GM12878 (cell line): ENCODE measurements at regions of chr10 and their contacts with region 1.

Region 1: DNA sequence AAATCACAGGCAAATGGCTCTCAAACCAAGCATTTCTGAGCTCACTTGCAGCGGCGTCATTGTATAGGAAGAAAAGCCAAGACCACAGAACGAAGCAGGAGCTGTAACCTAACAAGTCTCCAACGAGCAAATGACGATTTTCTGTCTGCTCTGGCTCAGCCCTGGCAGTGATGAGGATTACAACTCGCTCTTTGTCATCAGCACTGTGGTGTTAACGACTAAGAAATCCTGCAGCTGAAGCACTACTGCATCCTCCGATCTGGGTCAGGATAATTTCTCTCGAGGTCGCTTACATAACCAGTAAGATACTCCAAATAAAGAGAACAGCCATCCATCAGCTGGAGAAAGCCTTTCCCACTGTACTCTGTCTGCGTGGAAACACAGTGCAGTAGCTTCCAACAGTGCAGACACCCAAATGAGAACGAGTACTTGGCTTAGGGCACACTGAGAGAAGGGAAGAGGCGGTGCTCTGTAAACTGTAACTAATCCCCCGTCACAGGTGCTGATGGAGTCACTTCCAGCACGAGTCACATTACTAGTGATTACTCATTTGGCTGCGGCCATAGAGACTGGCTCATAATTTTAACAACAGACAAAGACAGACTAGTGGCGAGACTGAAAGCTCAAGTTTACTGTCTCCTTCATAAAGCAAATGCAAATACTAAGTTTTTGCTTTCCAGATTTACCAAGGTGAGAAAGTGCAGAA is 135.8 kb downstream of the NRBF2 start:
- DNase-seq: peak; percentile 95
- ATAC-seq: peak; percentile 87
- H3K4me3 ChIP-seq: peak overlapping the region; percentile 91
- H3K27ac ChIP-seq: peak overlapping the region; percentile 80
- H3K4me1 ChIP-seq: peaks cover 18% of the 10 kb centered on the region
- H3K27me3 ChIP-seq: no peaks in the 10 kb centered on the region
- CTCF ChIP-seq: peak in 1 of 3 experiments; percentile 30; a peak in 1 of 6 replicates
- EP300 ChIP-seq: peak; percentile 83 to 84; a peak in 3 of 4 replicates
- POLR2A ChIP-seq: peak; percentile 99
- RAD21 ChIP-seq: no peak

Region 2: DNA sequence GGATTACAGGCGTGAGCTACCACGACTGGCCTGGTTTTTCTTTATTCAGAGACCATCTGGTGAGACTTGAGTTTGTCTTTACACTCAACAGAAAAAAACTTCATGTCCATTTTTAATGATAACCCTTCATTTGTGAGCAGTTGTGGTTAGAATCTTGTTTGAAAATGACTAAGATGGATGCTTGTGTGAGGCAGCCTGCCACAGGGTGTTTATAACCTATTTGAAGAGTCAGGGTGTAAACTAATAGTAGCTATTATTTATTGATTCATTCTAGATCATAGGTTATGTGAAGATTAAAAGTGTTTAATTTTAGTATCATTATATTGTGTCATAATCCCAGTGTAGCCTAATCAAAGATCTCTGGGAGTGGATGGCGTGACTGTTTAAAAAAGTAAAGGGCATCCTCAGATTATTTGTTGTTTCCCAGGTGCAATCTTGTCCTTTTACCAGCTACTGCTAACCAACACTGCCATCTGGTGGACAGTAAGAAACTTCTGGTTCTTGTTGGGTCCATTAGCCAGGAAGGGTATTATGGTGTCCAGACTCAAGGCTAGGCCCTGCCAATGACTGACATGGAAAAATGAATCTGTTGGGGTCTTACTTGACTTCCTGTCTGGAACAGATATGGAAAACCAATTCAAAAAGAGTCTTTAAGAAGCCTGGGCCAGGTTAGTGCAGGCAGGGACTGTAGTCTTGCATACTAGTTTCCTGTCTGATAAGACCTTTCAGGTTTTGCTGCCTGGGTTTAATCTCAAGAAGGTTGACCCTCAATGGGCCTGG is 110.9 kb before region 1 on chr10:
- CTCF ChIA-PET with region 1: no interaction called
- POLR2A ChIA-PET with region 1: no interaction called
- RAD21 ChIA-PET with region 1: no interaction called
- SMC1A ChIA-PET with region 1: no interaction called
- in situ Hi-C with region 1: no loop called
- intact Hi-C with region 1: no loop called
- DNase-seq: peak; percentile 49
- ATAC-seq: peak; percentile 89
- H3K4me3 ChIP-seq: no peak overlapping the region
- H3K27ac ChIP-seq: 0 out of 2 replicates have a peak overlapping the region, but pooled peaks have one; percentile 31
- H3K4me1 ChIP-seq: peaks cover 3% of the 10 kb centered on the region; the same call in 1 of the 2 replicates
- H3K27me3 ChIP-seq: no peaks in the 10 kb centered on the region
- CTCF ChIP-seq: peak; percentile 70 to 86 (median 74); a peak in 5 of 6 replicates
- EP300 ChIP-seq: no peak
- POLR2A ChIP-seq: no peak
- RAD21 ChIP-seq: peak; percentile 97

Region 3: GRCh38 chr10:63206997-63207811 is 61.7 kb before region 1 on chr10:
- CTCF ChIA-PET with region 1: interaction called, 8 read pairs
- POLR2A ChIA-PET with region 1: interaction called, 3 read pairs
- RAD21 ChIA-PET with region 1: interaction called, 21 read pairs
- SMC1A ChIA-PET with region 1: interaction called, 20 read pairs
- in situ Hi-C with region 1: no loop called
- intact Hi-C with region 1: no loop called
- DNase-seq: peak; percentile 36
- ATAC-seq: peak; percentile 51
- H3K4me3 ChIP-seq: no peak overlapping the region; the same call in 1 of the 2 replicates
- H3K27ac ChIP-seq: peak overlapping the region; percentile 75
- H3K4me1 ChIP-seq: peaks cover 32% of the 10 kb centered on the region
- H3K27me3 ChIP-seq: no peaks in the 10 kb centered on the region
- CTCF ChIP-seq: no peak
- EP300 ChIP-seq: no peak
- POLR2A ChIP-seq: no peak; the same call in 1 of the 2 replicates
- RAD21 ChIP-seq: no peak

Region 4: DNA sequence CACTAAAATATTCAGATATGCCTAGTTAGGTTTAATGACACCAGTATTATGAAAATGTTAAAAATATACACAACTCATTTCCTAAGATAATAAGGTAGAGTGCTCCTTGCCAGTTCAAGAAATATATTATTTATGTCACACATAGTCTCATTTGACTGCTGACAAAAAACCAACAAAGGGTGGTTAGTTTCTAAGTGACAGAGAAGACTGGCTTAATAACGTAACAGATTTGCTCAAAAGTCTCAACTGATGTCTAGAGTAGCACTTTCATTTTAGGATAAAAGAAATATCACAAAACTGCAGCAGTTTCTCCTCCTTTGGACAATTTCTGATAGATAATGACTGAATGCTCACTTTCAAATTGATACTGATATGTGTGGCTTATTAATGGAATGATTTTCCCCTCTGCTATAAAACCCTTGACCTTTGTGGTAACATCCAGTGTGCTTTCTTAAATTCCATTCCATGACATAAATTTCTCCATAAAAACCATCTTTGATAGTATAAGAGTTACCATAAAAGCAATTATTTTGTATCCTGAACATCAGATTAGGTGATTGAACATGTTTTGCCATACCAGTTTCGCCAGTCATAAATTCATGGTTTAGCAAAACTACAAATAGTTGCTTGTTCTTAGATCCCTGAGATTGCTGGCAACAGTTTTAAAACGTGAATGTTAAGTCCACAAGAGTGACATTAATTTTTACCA is 41.6 kb before region 1 on chr10:
- CTCF ChIA-PET with region 1: interaction called, 6 read pairs
- POLR2A ChIA-PET with region 1: interaction called, 7 read pairs
- RAD21 ChIA-PET with region 1: interaction called, 17 read pairs
- SMC1A ChIA-PET with region 1: interaction called, 19 read pairs
- in situ Hi-C with region 1: no loop called
- intact Hi-C with region 1: loop called (anchors 5 kb)
- DNase-seq: no peak
- ATAC-seq: peak; percentile 79
- H3K4me3 ChIP-seq: no peak overlapping the region
- H3K27ac ChIP-seq: peak overlapping the region; percentile 66
- H3K4me1 ChIP-seq: peaks cover 27% of the 10 kb centered on the region
- H3K27me3 ChIP-seq: no peaks in the 10 kb centered on the region
- CTCF ChIP-seq: no peak
- EP300 ChIP-seq: no peak
- POLR2A ChIP-seq: no peak
- RAD21 ChIP-seq: no peak

Region 5: GRCh38 chr10:63256009-63256773 is 12.8 kb before region 1 on chr10:
- CTCF ChIA-PET with region 1: interaction called, 33 read pairs
- POLR2A ChIA-PET with region 1: interaction called, 8 read pairs
- RAD21 ChIA-PET with region 1: interaction called, 67 read pairs
- SMC1A ChIA-PET with region 1: interaction called, 68 read pairs
- in situ Hi-C with region 1: no loop called
- intact Hi-C with region 1: no loop called
- DNase-seq: no peak
- ATAC-seq: peak; percentile 31
- H3K4me3 ChIP-seq: peak overlapping the region; percentile 14; the same call in 1 of the 2 replicates
- H3K27ac ChIP-seq: 0 out of 2 replicates have a peak overlapping the region, but pooled peaks have one; percentile 42
- H3K4me1 ChIP-seq: peaks cover 36% of the 10 kb centered on the region
- H3K27me3 ChIP-seq: no peaks in the 10 kb centered on the region
- CTCF ChIP-seq: no peak
- EP300 ChIP-seq: no peak
- POLR2A ChIP-seq: no peak
- RAD21 ChIP-seq: no peak

Region 6: GRCh38 chr10:63355682-63356081 is 86.7 kb after region 1 on chr10:
- CTCF ChIA-PET with region 1: no interaction called
- POLR2A ChIA-PET with region 1: interaction called, 4 read pairs
- RAD21 ChIA-PET with region 1: interaction called, 5 read pairs
- SMC1A ChIA-PET with region 1: interaction called, 14 read pairs
- in situ Hi-C with region 1: no loop called
- intact Hi-C with region 1: loop called (anchors 1 kb)
- DNase-seq: no peak
- ATAC-seq: peak; percentile 64
- H3K4me3 ChIP-seq: no peak overlapping the region
- H3K27ac ChIP-seq: peak overlapping the region; percentile 51
- H3K4me1 ChIP-seq: peaks cover 13% of the 10 kb centered on the region
- H3K27me3 ChIP-seq: no peaks in the 10 kb centered on the region
- CTCF ChIP-seq: no peak
- EP300 ChIP-seq: no peak
- POLR2A ChIP-seq: no peak
- RAD21 ChIP-seq: no peak

Region 7: DNA sequence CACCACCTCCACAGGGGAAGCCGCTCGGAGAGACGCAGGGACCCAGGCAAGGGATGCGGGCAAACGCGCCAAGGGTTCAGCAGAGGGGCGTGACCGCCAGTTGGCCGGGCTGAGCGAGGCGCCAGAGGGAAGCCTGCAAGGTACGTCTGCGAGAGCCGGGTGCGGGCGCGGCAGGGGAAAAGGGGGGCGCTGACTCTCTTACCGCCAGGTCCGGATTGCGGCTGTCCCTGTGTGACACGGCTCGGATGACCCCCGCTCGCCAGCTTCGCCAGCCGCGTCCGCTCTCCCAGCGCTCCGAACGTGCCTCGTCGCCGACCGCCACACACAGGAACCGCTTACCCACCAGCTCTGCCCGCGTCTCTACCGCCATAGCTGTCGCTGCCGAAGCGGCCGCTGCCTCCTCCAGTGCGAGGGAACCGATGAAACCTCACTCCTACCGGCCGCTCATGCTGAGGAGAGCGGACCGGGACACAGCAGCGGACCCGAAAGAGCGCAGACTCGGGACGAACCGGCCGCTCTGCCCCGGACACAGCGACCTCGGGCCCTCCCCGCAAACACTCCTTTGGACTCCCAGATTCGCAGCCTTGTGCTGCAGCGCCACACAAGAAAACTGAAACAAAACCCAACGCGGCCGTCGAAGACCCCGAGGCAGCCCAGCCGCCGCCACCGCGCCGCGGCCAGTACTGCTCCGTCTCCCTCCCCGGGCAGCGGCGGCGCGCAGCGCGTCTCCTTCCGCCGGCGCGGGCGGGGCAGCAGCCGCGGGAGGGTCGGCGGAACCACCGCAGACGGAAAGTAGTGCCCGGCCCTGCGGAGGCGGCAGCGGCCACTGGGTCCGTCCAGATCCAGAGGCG is 196.6 kb after region 1 on chr10 and contains the start of gene JMJD1C:
- CTCF ChIA-PET with region 1: no interaction called
- POLR2A ChIA-PET with region 1: interaction called, 3 read pairs
- RAD21 ChIA-PET with region 1: interaction called, 6 read pairs
- SMC1A ChIA-PET with region 1: interaction called, 3 read pairs
- in situ Hi-C with region 1: no loop called
- intact Hi-C with region 1: loop called (anchors 5 kb)
- DNase-seq: no peak
- ATAC-seq: peak; percentile 85
- H3K4me3 ChIP-seq: peak within 1 kb of the TSS; percentile 87
- H3K27ac ChIP-seq: peak within 1 kb of the TSS; percentile 77
- H3K4me1 ChIP-seq: peaks cover 3% of the 10 kb centered on the region; the same call in 1 of the 2 replicates
- H3K27me3 ChIP-seq: no peaks in the 10 kb centered on the region
- CTCF ChIP-seq: 0 out of 6 replicates have a peak, but pooled peaks of 1 of the 3 experiments have one; percentile 9
- EP300 ChIP-seq: no peak
- POLR2A ChIP-seq: peak; percentile 91
- RAD21 ChIP-seq: 0 out of 2 replicates have a peak, but pooled peaks have one; percentile 20
- polyA plus RNA-seq, gene JMJD1C: 31.2 to 42.6 TPM